ENCODE measurements at regions of chr1 and their contacts with region 1.

Region 1: DNA sequence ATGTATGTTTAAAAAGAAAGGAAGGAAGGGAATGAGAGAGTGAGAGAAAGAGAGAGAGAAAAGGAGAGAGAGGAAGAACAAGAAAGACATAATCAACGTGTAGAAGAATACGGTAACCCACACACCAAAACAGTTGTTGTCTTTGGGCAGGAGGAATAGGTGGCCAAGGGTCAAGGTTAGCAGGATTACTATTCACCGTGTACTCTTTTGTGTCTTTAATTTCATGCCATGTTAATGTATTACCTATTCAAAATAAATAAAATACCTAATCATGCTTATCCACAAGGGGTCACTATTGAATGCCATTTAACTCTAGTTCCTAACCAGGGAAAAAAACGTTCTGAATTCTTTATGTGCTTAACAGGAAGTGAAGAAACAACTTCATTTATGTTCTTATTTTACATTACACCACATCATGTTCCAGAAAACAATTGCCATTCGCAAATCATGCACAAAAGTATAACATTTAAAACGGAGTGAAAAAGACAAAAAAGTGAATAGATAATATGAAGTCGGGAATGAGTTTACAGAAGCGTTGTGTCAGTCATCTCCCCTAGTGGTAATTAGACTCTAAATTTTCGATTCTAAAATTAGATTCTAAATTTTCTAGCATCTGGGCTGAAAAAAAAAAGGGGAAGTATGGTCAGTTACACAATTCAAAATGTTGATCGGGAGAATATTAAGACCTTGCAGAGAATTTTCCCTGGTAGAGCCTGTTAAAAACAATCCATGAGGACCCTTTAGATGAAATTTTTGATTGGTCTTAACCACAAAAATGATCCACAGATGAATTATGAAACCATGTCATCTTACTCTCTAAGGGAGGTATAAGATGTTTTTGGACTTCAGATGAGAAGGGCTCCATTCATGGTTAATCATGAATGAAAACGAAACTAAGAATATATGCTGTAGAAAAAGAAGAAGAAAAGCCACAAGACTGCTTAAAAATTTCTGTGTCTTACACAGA is 700 bp upstream of the KMO start:
- DNase-seq: peak; percentile 74
- H3K4me3 ChIP-seq: peak overlapping the region; percentile 44 to 82 (median 53)
- H3K27ac ChIP-seq: peak overlapping the region; percentile 92
- H3K4me1 ChIP-seq: peaks cover 15% of the 10 kb centered on the region
- H3K27me3 ChIP-seq: no peaks in the 10 kb centered on the region
- CTCF ChIP-seq: peak; percentile 54 to 55

Region 2: GRCh38 chr1:241592273-241592958 is 60.9 kb after region 1 on chr1:
- CTCF ChIA-PET with region 1: no interaction called
- dilution Hi-C with region 1: no loop called
- in situ Hi-C with region 1: no loop called
- intact Hi-C with region 1: loop called (anchors 5 kb)
- DNase-seq: peak; percentile 99
- H3K4me3 ChIP-seq: no peak overlapping the region
- H3K27ac ChIP-seq: peak overlapping the region; percentile 97
- H3K4me1 ChIP-seq: peaks cover 45% of the 10 kb centered on the region
- H3K27me3 ChIP-seq: no peaks in the 10 kb centered on the region
- CTCF ChIP-seq: no peak

Region 3: GRCh38 chr1:241627453-241628259 is 96.2 kb after region 1 on chr1:
- CTCF ChIA-PET with region 1: no interaction called
- dilution Hi-C with region 1: no loop called
- in situ Hi-C with region 1: loop called in 1 of 2 experiments (anchors 5 kb)
- intact Hi-C with region 1: loop called (anchors 1 kb)
- DNase-seq: peak; percentile 70
- H3K4me3 ChIP-seq: no peak overlapping the region
- H3K27ac ChIP-seq: no peak overlapping the region
- H3K4me1 ChIP-seq: no peaks in the 10 kb centered on the region
- H3K27me3 ChIP-seq: no peaks in the 10 kb centered on the region
- CTCF ChIP-seq: peak; percentile 68 to 75

Region 4: DNA sequence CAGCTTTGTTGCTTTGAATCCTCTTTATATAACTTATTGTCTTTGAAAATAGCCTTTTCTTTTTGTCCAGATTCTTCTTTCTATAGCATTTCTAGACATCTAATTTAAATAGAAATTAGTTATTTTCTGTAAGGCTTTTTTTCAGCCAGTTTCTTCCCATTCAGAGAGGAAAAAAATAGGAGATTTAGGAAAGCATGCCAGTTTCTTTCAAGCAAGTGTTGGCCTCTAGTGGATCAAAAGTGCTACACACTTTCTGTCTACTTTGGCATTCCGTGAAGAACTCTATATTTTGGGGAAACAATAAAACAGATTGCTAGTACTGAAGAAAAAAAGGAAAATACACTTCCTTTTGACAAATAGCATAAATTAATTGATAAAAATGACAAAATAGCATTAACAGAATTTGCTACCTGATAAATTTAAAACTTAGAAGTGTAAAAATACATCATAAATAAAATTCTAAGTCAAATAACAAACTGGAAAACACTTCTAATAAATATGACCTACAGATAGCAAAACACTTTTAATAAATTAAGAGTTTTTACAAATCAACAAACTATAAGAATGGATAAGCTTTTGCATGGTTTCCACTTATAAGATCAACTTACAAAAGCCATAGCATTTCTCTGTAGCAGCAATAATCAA is 303.4 kb after region 1 on chr1:
- CTCF ChIA-PET with region 1: no interaction called
- dilution Hi-C with region 1: no loop called
- in situ Hi-C with region 1: loop called (anchors 5 to 10 kb)
- intact Hi-C with region 1: loop called (anchors 1 kb)
- DNase-seq: no peak
- H3K4me3 ChIP-seq: no peak overlapping the region
- H3K27ac ChIP-seq: no peak overlapping the region
- H3K4me1 ChIP-seq: peaks cover 11% of the 10 kb centered on the region
- H3K27me3 ChIP-seq: no peaks in the 10 kb centered on the region
- CTCF ChIP-seq: peak; percentile 76 to 82

Region 5: GRCh38 chr1:241998412-241998921 is 467.0 kb after region 1 on chr1:
- CTCF ChIA-PET with region 1: no interaction called
- dilution Hi-C with region 1: no loop called
- in situ Hi-C with region 1: loop called in 1 of 2 experiments (anchors 10 kb)
- intact Hi-C with region 1: loop called (anchors 5 kb)
- DNase-seq: peak; percentile 78
- H3K4me3 ChIP-seq: no peak overlapping the region
- H3K27ac ChIP-seq: no peak overlapping the region
- H3K4me1 ChIP-seq: peaks cover 3% of the 10 kb centered on the region
- H3K27me3 ChIP-seq: no peaks in the 10 kb centered on the region
- CTCF ChIP-seq: peak in 1 of 2 donors; percentile 48

Region 6: DNA sequence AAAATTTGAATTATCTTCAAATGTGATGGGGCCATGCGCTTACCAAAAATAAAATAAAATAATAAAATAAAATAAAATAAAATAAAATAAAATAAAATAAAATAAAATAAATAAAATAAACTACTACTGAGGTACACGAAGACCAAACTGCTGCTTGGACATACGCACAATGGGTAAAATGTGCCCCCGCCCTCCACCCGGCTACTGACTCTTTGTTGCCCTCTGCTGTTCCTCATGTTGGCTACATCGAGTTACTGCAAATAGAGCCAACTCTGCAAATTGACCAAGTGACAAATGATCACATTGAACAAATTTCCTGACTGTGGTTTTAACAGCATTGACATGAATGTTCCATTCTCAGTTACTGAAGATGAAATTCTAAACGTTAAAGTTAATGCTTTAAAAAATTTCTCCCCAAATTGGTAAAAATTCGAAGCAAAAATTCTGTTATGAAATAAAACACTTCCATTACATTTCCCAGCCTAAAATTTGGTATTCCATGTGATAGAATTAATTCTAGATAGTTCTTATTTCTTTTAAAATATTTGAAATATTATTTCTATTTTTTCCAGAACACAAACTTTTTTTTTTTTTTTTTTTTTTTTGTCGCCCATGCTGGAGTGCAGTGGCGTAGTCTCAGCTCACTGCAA is 486.2 kb after region 1 on chr1:
- CTCF ChIA-PET with region 1: no interaction called
- dilution Hi-C with region 1: no loop called
- in situ Hi-C with region 1: no loop called
- intact Hi-C with region 1: loop called (anchors 2 kb)
- DNase-seq: peak; percentile 33
- H3K4me3 ChIP-seq: no peak overlapping the region
- H3K27ac ChIP-seq: no peak overlapping the region
- H3K4me1 ChIP-seq: peaks cover 4% of the 10 kb centered on the region
- H3K27me3 ChIP-seq: peaks cover 2% of the 10 kb centered on the region
- CTCF ChIP-seq: peak; percentile 66 to 79